Common myeloid progenitor, CD34-positive (primary cell): ENCODE measurements at regions of chr18 and their contacts with region 1.

Region 1: DNA sequence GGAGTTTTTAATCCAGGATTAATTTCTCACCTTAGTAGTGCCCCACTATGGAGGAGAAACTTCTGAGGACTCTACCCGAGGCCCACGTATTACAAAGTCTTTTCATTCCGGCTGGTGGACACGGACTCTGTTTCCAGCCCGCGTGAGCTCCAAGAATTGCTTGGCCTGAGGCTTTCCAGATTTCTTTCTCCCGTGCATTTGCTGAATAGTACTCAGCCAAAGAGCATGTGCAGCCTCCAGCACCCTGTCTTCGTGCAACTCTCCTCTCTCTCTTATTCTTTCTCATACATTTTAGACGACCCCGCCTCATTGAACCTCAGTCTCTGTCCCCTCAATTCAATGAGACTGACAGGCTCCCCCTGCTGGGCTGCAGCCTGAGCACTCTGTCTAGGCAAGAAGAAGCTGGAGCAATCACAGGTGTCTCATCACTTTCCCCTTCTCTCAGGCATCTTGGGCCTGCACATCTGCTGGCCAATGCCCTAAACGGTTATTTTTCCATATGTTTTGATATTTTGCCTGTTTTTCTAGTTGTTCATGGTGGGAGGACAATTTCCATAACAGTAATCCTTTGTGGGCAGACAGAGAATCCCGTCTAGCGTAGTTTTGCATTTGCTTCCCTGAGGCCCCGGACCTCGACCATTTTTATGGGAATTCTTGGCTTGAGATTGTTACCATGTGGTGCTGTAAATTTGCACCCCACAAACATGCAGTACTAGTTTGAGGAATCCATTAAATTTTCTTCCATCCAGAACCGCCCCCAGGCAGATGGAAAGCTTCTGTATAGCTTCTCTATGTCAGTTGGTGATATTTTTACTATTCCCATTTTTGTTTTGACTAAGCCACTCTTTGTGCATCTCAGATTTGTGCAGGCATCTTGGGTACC is 50.1 kb upstream of the LPIN2 start:
- DNase-seq: peak; percentile 58 to 66 (median 64)
- H3K4me3 ChIP-seq: peak overlapping the region in 2 of 7 experiments; percentile 2 to 43
- H3K27ac ChIP-seq: no peak overlapping the region
- H3K4me1 ChIP-seq: peaks cover 16 to 49% (median 39%) of the 10 kb centered on the region in 4 experiments
- H3K27me3 ChIP-seq: no peaks in the 10 kb centered on the region

Region 2: GRCh38 chr18:3002732-3003131 is 60.3 kb before region 1 on chr18:
- CTCF ChIA-PET with region 1: interaction called, 129 read pairs
- POLR2A ChIA-PET with region 1: interaction called, 3 read pairs
- DNase-seq: no peak
- H3K4me3 ChIP-seq: no peak overlapping the region
- H3K27ac ChIP-seq: no peak overlapping the region
- H3K4me1 ChIP-seq: peaks cover 5 to 15% (median 10%) of the 10 kb centered on the region in 4 experiments
- H3K27me3 ChIP-seq: no peaks in the 10 kb centered on the region

Region 3: DNA sequence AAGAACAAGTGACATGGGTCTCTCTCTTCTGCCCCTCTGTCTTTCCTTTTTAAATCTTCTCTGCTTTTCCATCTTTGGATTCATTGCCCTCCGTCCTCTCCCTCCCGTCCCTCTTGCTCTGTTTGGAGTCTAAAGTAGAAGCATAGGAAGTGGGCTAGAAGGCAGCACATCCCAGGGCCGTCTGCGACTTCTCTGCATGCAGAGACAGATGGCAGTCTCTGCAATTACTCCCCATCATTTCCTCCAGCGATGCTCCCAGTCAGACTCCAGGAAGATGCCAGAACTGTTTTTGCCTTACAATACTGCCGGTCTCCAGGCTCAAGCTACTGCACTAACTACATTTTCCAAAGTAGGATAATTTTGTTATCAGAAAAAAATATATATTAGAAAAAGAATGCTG is 14.9 kb before region 1 on chr18:
- CTCF ChIA-PET with region 1: interaction called, 12 read pairs
- POLR2A ChIA-PET with region 1: no interaction called
- DNase-seq: peak in 2 of 3 donors; percentile 18 to 31
- H3K4me3 ChIP-seq: no peak overlapping the region
- H3K27ac ChIP-seq: no peak overlapping the region
- H3K4me1 ChIP-seq: peaks cover 10 to 23% (median 16%) of the 10 kb centered on the region in 4 experiments
- H3K27me3 ChIP-seq: no peaks in the 10 kb centered on the region

Region 4: GRCh38 chr18:3129053-3129864 is 66.2 kb after region 1 on chr18:
- CTCF ChIA-PET with region 1: interaction called, 10 read pairs
- POLR2A ChIA-PET with region 1: no interaction called
- DNase-seq: peak; percentile 83 to 91 (median 91)
- H3K4me3 ChIP-seq: peak overlapping the region in 1 of 7 experiments; percentile 46
- H3K27ac ChIP-seq: no peak overlapping the region
- H3K4me1 ChIP-seq: peaks cover 0 to 4% (median 0%) of the 10 kb centered on the region in 4 experiments
- H3K27me3 ChIP-seq: no peaks in the 10 kb centered on the region